ENCODE measurements at regions of chr1 and their contacts with region 1.

Region 1: GRCh38 chr1:47437447-47438164 is at the start of gene FOXD2:
- DNase-seq: peak; percentile 24
- H3K4me3 ChIP-seq: peak within 1 kb of the TSS; percentile 79
- H3K27ac ChIP-seq: no peak within 1 kb of the TSS
- H3K27me3 ChIP-seq: peaks cover 35% of the 10 kb centered on the region
- CTCF ChIP-seq: peak; percentile 68
- polyA plus RNA-seq, gene FOXD2: 0.01 TPM in 1 of 2 replicates, not detected in the other

Region 2: GRCh38 chr1:47211796-47212269 is 225.8 kb before region 1 on chr1:
- CTCF ChIA-PET with region 1: no interaction called
- POLR2A ChIA-PET with region 1: no interaction called
- DNase-seq: no peak
- H3K4me3 ChIP-seq: no peak overlapping the region
- H3K27ac ChIP-seq: no peak overlapping the region
- H3K27me3 ChIP-seq: peaks cover 22% of the 10 kb centered on the region
- CTCF ChIP-seq: no peak

Region 3: DNA sequence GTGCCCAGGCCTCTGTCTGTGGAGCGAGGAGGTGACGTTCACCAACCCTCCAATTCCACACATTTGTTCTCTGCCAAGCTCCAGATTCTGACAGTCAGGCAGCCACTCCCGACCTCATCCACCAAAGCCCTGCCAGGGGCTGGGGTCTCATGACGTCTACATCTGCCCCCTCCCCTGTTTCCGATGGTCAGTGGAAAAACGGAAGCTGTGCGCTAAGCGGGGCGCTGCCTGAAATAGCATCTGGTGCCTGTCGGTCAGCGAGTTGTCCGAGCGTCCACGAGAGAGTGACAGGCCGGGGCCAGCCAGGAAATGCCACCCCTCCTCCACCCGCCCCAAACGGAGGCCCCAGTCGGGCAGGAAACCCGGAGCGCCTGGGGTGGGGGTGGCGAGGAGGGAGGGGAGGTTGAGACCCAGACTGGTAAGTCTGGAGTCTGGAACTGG is 202.3 kb before region 1 on chr1:
- CTCF ChIA-PET with region 1: no interaction called
- POLR2A ChIA-PET with region 1: no interaction called
- DNase-seq: no peak
- H3K4me3 ChIP-seq: no peak overlapping the region
- H3K27ac ChIP-seq: no peak overlapping the region
- H3K27me3 ChIP-seq: peaks cover 70% of the 10 kb centered on the region
- CTCF ChIP-seq: no peak

Region 4: GRCh38 chr1:47333922-47334764 is 103.5 kb before region 1 on chr1:
- CTCF ChIA-PET with region 1: interaction called, 19 read pairs
- POLR2A ChIA-PET with region 1: no interaction called
- DNase-seq: no peak
- H3K4me3 ChIP-seq: peak overlapping the region; percentile 93
- H3K27ac ChIP-seq: peak overlapping the region; percentile 90
- H3K27me3 ChIP-seq: no peaks in the 10 kb centered on the region
- CTCF ChIP-seq: peak; percentile 31

Region 5: GRCh38 chr1:47409311-47410070 is 28.1 kb before region 1 on chr1:
- CTCF ChIA-PET with region 1: interaction called, 31 read pairs
- POLR2A ChIA-PET with region 1: no interaction called
- DNase-seq: peak; percentile 51
- H3K4me3 ChIP-seq: no peak overlapping the region
- H3K27ac ChIP-seq: peak overlapping the region; percentile 47
- H3K27me3 ChIP-seq: peaks cover 4% of the 10 kb centered on the region
- CTCF ChIP-seq: no peak

Region 6: GRCh38 chr1:47449822-47450552 is 12.4 kb after region 1 on chr1:
- CTCF ChIA-PET with region 1: interaction called, 44 read pairs
- POLR2A ChIA-PET with region 1: interaction called, 3 read pairs
- DNase-seq: no peak
- H3K4me3 ChIP-seq: no peak overlapping the region
- H3K27ac ChIP-seq: no peak overlapping the region
- H3K27me3 ChIP-seq: peaks cover 64% of the 10 kb centered on the region
- CTCF ChIP-seq: peak; percentile 45

Region 7: GRCh38 chr1:47558601-47559593 is 121.3 kb after region 1 on chr1:
- CTCF ChIA-PET with region 1: no interaction called
- POLR2A ChIA-PET with region 1: no interaction called
- DNase-seq: no peak
- H3K4me3 ChIP-seq: no peak overlapping the region
- H3K27ac ChIP-seq: no peak overlapping the region
- H3K27me3 ChIP-seq: peaks cover 36% of the 10 kb centered on the region
- CTCF ChIP-seq: no peak

Region 8: DNA sequence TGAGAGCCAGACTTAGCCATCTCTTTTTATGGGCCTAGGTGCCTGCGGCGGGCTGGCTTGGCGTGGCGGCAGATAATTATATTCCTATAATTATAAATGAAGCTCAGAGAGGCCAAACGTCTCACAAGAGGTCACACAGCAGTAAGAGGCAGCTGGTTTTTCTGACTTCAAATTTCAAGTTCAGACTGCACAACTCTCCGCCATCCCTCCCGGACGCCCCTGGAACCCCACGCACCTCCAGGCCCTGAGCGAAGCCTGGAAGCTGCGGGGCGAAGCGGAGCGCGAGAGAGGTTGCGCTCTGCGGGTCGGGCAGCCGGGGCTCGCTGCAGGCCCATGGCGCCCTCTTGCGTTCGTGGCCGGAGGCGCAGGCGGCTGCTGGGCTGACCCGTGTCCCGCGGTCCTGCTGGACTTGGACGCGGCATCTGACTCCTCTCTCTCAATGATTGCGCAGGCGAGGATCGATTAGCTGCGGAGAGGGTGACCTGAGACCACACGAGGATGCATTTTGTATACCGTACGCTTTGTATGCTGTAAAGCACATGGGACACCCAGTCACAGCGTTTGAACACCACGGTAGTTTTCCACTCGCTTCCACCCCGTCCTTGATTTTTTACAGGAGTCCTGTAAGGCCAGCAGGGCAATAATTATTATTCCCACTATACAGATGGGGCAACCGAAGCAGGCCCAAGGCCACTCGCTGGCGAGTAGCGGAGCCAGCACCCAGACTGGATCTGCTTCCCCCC is 272.9 kb after region 1 on chr1:
- CTCF ChIA-PET with region 1: interaction called, 255 read pairs
- POLR2A ChIA-PET with region 1: interaction called, 3 read pairs
- DNase-seq: no peak
- H3K4me3 ChIP-seq: no peak overlapping the region
- H3K27ac ChIP-seq: no peak overlapping the region
- H3K27me3 ChIP-seq: peaks cover 64% of the 10 kb centered on the region
- CTCF ChIP-seq: peak; percentile 94

Measured in AG04450 (cell line).